ENCODE measurements at regions of chr21 and their contacts with region 1.

Region 1: DNA sequence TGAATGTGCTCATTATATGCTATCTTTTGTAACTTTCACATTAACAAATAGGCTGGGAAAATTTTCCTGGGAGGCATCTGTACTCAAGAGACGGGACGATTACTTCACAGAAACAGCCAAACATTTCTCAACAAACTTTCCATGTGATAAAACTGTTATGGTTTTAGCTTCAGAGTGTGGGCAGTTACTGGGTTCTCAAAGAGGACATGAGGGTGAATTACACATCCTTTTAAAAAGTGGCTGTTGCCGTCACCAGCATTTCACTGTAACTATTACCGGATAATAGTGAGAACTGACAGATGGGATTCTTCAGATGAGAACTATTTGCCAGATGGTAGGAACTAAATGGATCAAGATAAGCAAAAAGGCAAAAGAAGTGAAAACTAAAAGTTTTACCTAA is 109.1 kb downstream of the APP start:
- DNase-seq: no peak
- H3K4me3 ChIP-seq: no peak overlapping the region
- H3K27ac ChIP-seq: no peak overlapping the region
- H3K4me1 ChIP-seq: peaks cover 14% of the 10 kb centered on the region
- H3K27me3 ChIP-seq: no peaks in the 10 kb centered on the region
- CTCF ChIP-seq: no peak

Region 2: DNA sequence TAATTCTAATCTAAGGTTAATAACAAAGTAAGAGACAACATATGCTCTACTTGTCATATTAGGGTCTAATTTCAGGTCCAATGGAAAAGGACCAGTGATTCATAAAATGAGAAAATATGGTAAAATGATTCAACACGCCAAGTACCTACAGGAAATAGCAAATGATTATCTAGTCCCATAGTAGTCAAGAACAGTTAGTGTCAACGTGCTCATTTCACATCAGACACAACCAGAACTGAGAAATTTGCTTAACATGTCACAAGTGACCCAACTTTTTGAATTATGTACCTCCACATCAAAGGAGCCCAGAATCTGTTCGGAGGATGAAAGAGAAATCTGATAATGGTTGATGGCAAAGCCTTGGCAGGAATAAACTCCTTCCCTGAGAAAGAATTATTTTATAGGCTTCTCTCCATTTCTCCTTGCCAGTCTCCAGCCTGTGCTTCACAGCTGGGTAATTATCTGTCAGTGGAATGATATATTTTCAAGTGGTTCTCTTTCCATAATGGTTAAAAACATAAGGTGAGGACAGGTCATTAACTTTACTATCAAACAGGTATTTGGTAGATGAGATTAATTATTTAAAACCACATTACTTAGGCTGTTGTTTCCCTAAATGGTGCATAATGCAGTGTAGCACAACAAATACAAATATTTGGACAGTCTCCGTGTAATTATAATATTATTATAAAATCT is 25.9 kb after region 1 on chr21:
- CTCF ChIA-PET with region 1: no interaction called
- dilution Hi-C with region 1: no loop called
- in situ Hi-C with region 1: no loop called
- intact Hi-C with region 1: loop called (anchors 1 kb)
- DNase-seq: no peak
- H3K4me3 ChIP-seq: no peak overlapping the region
- H3K27ac ChIP-seq: no peak overlapping the region
- H3K4me1 ChIP-seq: no peaks in the 10 kb centered on the region
- H3K27me3 ChIP-seq: no peaks in the 10 kb centered on the region
- CTCF ChIP-seq: no peak